Naive thymus-derived CD8-positive, alpha-beta T cell (primary cell): ENCODE measurements at regions of chr6 and their contacts with region 1.

Region 1: DNA sequence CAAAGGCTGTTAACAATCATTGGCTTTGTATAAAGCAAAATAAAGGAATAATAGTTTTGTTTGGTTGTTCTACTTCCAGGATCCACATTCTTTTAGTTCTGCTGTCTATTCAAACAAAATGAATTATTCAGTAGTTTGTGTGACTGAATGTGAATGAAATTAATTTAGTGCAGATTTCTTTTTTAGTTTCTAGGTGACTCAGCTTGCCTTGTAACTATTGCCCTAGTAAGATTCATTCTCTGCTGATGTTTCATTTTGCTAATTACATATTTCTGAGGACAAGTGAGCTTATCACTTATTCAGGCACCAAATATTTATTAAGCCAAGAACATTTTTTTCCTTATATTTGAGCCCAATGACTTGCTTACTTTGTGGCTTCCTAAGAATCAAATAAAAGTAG is 46.5 kb upstream of the RIPOR2 start:
- DNase-seq: no peak
- ATAC-seq: no peak
- H3K4me3 Mint-ChIP-seq: no peak overlapping the region
- H3K27ac Mint-ChIP-seq: peak overlapping the region in 2 of 10 donors; percentile 20 to 44
- H3K4me1 Mint-ChIP-seq: peaks cover 26 to 80% (median 78%) of the 10 kb centered on the region in 4 donors
- H3K27me3 Mint-ChIP-seq: no peaks in the 10 kb centered on the region

Region 2: DNA sequence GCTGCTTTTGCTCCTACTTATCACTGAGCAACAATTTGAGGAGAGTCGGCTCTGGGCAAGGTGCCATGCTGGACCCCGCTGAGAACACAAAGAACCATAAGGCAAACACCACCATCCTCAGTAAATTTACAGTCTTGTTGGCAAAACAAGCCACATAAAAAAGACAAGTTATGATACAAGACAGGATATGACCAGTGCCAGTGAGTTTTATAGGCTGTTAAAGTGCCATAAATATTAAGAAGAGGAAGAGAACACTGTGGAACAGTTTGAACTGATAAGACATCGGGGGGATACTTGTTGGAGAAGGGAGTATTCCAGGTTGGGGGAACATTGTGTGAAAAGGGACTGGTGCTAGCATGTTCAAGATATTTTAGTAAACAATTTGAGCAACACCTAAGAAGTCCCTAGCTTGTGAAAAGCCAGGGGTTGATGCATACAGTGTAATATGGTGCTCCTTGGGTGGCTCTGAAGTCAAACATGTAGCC is 21.2 kb before region 1 on chr6:
- POLR2A ChIA-PET with region 1: interaction called, 11 read pairs
- DNase-seq: peak in 6 of 10 donors; percentile 11 to 70 (median 48)
- ATAC-seq: peak; percentile 74 to 93
- H3K4me3 Mint-ChIP-seq: peak overlapping the region; percentile 34 to 85 (median 67)
- H3K27ac Mint-ChIP-seq: peak overlapping the region; percentile 90 to 100 (median 96)
- H3K4me1 Mint-ChIP-seq: peaks cover 44 to 93% (median 83%) of the 10 kb centered on the region in 4 donors
- H3K27me3 Mint-ChIP-seq: no peaks in the 10 kb centered on the region